HEK293 (cell line): ENCODE measurements at regions of chr14 and their contacts with region 1.

Region 1: DNA sequence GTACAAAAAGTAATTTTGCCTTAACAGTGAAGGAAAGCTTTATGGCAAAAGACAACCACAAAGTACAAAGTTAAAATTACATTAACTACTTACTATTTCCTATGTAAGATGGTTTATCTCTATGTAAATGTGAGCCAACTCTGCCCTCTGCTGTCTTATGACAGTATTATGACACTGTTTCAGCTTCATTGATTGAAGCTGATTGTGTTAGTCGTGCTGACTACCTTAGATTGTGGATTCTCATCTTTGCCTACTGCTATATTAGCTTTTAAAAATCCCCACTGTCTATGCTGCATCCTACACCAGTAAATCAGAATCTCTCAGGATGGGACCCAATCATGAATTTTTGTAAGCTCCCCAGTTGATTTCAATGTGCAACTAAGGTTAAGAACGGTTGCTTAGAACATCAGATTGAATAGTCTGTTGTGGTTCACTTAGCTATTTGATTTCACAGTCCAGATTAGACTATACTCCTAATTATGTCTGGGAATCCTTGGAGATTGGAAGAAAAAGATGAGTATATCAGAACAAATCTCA is 12.2 kb upstream of the SPTB start:
- H3K4me3 ChIP-seq: no peak overlapping the region
- H3K27ac ChIP-seq: no peak overlapping the region
- H3K4me1 ChIP-seq: no peaks in the 10 kb centered on the region
- CTCF ChIP-seq: peak; percentile 44; the same call in 1 of the 2 replicates

Region 2: GRCh38 chr14:64698903-64699302 is 193.0 kb before region 1 on chr14:
- CTCF ChIA-PET with region 1: interaction called, 10 read pairs
- POLR2A ChIA-PET with region 1: interaction called, 3 read pairs
- H3K4me3 ChIP-seq: no peak overlapping the region
- H3K27ac ChIP-seq: peak overlapping the region; percentile 31; the same call in 1 of the 2 replicates
- H3K4me1 ChIP-seq: peaks cover 23% of the 10 kb centered on the region
- CTCF ChIP-seq: no peak

Region 3: GRCh38 chr14:64800000-64800399 is 91.9 kb before region 1 on chr14:
- CTCF ChIA-PET with region 1: interaction called, 94 read pairs
- POLR2A ChIA-PET with region 1: no interaction called
- H3K4me3 ChIP-seq: no peak overlapping the region
- H3K27ac ChIP-seq: no peak overlapping the region
- H3K4me1 ChIP-seq: no peaks in the 10 kb centered on the region
- CTCF ChIP-seq: no peak

Region 4: GRCh38 chr14:64823305-64823861 is 68.5 kb before region 1 on chr14:
- CTCF ChIA-PET with region 1: interaction called, 199 read pairs
- POLR2A ChIA-PET with region 1: interaction called, 5 read pairs
- H3K4me3 ChIP-seq: no peak overlapping the region
- H3K27ac ChIP-seq: no peak overlapping the region
- H3K4me1 ChIP-seq: no peaks in the 10 kb centered on the region
- CTCF ChIP-seq: peak; percentile 77

Region 5: GRCh38 chr14:64910847-64911495 is 19.1 kb after region 1 on chr14:
- CTCF ChIA-PET with region 1: interaction called, 32 read pairs
- POLR2A ChIA-PET with region 1: interaction called, 3 read pairs
- H3K4me3 ChIP-seq: no peak overlapping the region
- H3K27ac ChIP-seq: no peak overlapping the region
- H3K4me1 ChIP-seq: peaks cover 3% of the 10 kb centered on the region; the same call in 1 of the 2 replicates
- CTCF ChIP-seq: no peak